GM13976 (cell line): ENCODE measurements at regions of chr14 and their contacts with region 1.

Region 1: GRCh38 chr14:77067632-77068514 is 30.2 kb upstream of the CIPC start:
- DNase-seq: peak; percentile 81
- CTCF ChIP-seq: peak; percentile 92

Region 2: DNA sequence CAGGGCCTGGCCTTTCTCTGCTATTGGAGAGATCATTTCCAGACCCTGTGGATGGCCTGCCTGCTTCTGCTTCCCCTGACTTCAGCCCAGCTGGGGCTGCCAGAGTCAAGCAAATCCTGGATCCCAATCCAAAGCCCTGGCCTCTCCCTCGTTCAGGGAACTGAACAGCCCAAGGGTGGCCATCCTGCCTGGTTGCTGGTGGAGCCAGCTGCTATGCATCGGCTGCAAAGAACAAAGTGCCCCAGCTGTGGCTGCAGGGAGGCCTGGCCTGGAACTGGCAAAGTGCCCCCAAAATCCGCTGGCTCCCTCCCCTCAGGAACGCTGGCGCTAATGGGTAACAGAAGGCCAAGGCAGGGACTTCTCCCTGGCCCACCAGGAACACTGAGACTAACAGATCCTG is 185.2 kb before region 1 on chr14:
- in situ Hi-C with region 1: loop called (anchors 10 kb)
- DNase-seq: no peak
- CTCF ChIP-seq: no peak

Region 3: DNA sequence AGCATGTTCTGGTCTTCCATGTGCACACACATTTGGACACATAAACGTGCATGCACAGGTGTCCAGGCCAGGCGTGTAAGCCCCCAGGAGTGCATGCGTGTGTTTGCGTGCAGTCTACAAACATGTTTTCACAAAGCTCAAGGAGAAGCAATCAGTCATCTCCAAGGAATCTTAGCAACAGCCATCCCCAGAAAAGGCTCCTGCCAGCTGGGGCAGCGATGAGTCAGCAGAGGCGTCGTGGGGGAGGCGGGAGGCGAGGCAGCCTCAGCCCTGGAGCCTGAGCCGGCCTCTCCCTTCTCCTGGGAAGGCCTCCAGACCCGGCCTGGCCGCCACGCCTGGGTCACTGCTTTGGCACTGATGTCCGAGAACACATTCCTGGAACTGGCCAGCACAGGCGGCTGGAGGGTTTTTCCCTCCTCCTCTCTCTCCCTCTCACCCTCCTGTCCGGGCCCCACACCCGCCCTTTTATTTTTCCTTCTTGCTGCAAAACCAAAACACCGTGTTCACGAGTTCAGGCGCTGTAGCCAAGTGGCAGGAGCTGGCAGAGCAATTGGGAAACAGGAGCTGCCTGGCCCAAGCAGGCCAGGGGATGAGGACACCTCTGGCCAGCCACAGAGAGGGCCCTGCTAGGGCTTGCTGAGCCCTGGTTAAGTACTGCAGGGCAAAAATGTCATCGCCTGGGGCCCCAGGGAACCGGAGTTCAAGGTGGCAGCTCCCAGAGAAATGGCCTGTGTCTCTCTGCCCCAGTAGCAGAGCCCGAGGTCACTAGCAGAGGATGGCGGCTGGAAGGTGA is 148.9 kb before region 1 on chr14:
- in situ Hi-C with region 1: loop called (anchors 10 kb)
- DNase-seq: no peak
- CTCF ChIP-seq: no peak

Region 4: GRCh38 chr14:77238356-77238755 is 170.5 kb after region 1 on chr14:
- in situ Hi-C with region 1: no loop called
- DNase-seq: no peak
- CTCF ChIP-seq: no peak